ENCODE measurements at regions of chr3 and their contacts with region 1.

Region 1: GRCh38 chr3:56347219-56347871 is 120.9 kb downstream of the ERC2 start:
- DNase-seq: no peak
- ATAC-seq: peak; percentile 65
- H3K4me3 ChIP-seq: no peak overlapping the region
- H3K27ac ChIP-seq: no peak overlapping the region
- H3K4me1 ChIP-seq: no peaks in the 10 kb centered on the region
- H3K27me3 ChIP-seq: peaks cover 1 to 3% of the 10 kb centered on the region in 2 experiments; a peak in 1 of 4 replicates
- CTCF ChIP-seq: peak; percentile 35 to 56 (median 55); a peak in 4 of 6 replicates
- EP300 ChIP-seq: no peak
- POLR2A ChIP-seq: no peak
- RAD21 ChIP-seq: peak; percentile 29; the same call in 1 of the 2 replicates

Region 2: GRCh38 chr3:56453011-56453410 is 105.7 kb after region 1 on chr3:
- CTCF ChIA-PET with region 1: interaction called, 57 read pairs
- POLR2A ChIA-PET with region 1: no interaction called
- RAD21 ChIA-PET with region 1: no interaction called
- SMC1A ChIA-PET with region 1: no interaction called
- in situ Hi-C with region 1: loop called (anchors 5 kb)
- intact Hi-C with region 1: no loop called
- DNase-seq: no peak
- ATAC-seq: no peak
- H3K4me3 ChIP-seq: no peak overlapping the region
- H3K27ac ChIP-seq: no peak overlapping the region
- H3K4me1 ChIP-seq: no peaks in the 10 kb centered on the region
- H3K27me3 ChIP-seq: peaks cover 0 to 2% of the 10 kb centered on the region in 2 experiments; a peak in 1 of 4 replicates
- CTCF ChIP-seq: no peak
- EP300 ChIP-seq: no peak
- POLR2A ChIP-seq: no peak
- RAD21 ChIP-seq: no peak

Region 3: DNA sequence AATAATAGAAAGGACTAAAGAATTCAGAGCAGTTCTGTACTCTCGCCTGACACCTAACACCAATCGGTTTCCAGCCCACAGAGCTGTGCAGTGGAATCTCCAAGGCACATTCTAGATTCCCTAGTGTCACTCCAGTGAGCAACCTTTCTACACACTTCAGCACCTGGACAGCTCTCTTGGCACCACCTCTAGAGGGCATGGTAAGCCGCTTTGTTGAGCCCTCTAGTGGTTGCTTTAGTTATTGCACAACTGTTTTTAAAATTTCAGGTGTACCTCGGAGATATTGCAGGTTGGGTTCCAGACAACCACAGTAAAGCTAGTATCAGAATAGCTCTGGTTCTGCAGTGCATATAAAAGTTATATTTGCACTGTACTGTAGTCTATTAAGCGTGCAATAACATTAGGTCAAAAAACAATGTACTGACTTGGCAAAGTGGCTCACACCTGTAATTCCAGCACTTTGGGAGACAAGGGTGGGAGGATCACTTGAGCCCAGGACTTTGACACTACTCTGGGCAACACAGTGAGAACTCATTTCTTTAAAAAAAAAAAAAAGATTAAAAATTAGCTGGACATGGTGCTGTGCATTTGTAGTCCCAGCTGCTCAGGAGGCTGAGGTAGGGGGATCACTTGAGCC is 147.5 kb after region 1 on chr3:
- CTCF ChIA-PET with region 1: interaction called, 5 read pairs
- POLR2A ChIA-PET with region 1: no interaction called
- RAD21 ChIA-PET with region 1: no interaction called
- SMC1A ChIA-PET with region 1: no interaction called
- in situ Hi-C with region 1: no loop called
- intact Hi-C with region 1: loop called (anchors 5 kb)
- DNase-seq: peak; percentile 23
- ATAC-seq: peak; percentile 94
- H3K4me3 ChIP-seq: no peak overlapping the region
- H3K27ac ChIP-seq: no peak overlapping the region
- H3K4me1 ChIP-seq: no peaks in the 10 kb centered on the region
- H3K27me3 ChIP-seq: no peaks in the 10 kb centered on the region
- CTCF ChIP-seq: peak; percentile 93 to 99 (median 98)
- EP300 ChIP-seq: no peak
- POLR2A ChIP-seq: no peak
- RAD21 ChIP-seq: peak; percentile 74

Region 4: GRCh38 chr3:56536735-56537134 is 189.4 kb after region 1 on chr3:
- CTCF ChIA-PET with region 1: no interaction called
- POLR2A ChIA-PET with region 1: no interaction called
- RAD21 ChIA-PET with region 1: no interaction called
- SMC1A ChIA-PET with region 1: no interaction called
- in situ Hi-C with region 1: no loop called
- intact Hi-C with region 1: no loop called
- DNase-seq: no peak
- ATAC-seq: no peak
- H3K4me3 ChIP-seq: no peak overlapping the region
- H3K27ac ChIP-seq: no peak overlapping the region
- H3K4me1 ChIP-seq: no peaks in the 10 kb centered on the region
- H3K27me3 ChIP-seq: peaks cover 0 to 2% of the 10 kb centered on the region in 2 experiments; a peak in 1 of 4 replicates
- CTCF ChIP-seq: no peak
- EP300 ChIP-seq: no peak
- POLR2A ChIP-seq: no peak
- RAD21 ChIP-seq: no peak

Region 5: GRCh38 chr3:57026918-57027317 is 679.6 kb after region 1 on chr3:
- CTCF ChIA-PET with region 1: no interaction called
- POLR2A ChIA-PET with region 1: no interaction called
- RAD21 ChIA-PET with region 1: no interaction called
- SMC1A ChIA-PET with region 1: no interaction called
- in situ Hi-C with region 1: no loop called
- intact Hi-C with region 1: no loop called
- DNase-seq: no peak
- ATAC-seq: no peak
- H3K4me3 ChIP-seq: no peak overlapping the region
- H3K27ac ChIP-seq: no peak overlapping the region
- H3K4me1 ChIP-seq: no peaks in the 10 kb centered on the region
- H3K27me3 ChIP-seq: no peaks in the 10 kb centered on the region
- CTCF ChIP-seq: no peak
- EP300 ChIP-seq: no peak
- POLR2A ChIP-seq: no peak
- RAD21 ChIP-seq: no peak

Measured in GM12878 (cell line).